Activated CD8-positive, alpha-beta memory T cell treated with anti-CD3 and anti-CD28 coated beads, Interleukin-2, amount 10 ng/mL, durations not matched to agents 7 days and 5 days (primary cell): ENCODE measurements at regions of chr9 and their contacts with region 1.

Region 1: DNA sequence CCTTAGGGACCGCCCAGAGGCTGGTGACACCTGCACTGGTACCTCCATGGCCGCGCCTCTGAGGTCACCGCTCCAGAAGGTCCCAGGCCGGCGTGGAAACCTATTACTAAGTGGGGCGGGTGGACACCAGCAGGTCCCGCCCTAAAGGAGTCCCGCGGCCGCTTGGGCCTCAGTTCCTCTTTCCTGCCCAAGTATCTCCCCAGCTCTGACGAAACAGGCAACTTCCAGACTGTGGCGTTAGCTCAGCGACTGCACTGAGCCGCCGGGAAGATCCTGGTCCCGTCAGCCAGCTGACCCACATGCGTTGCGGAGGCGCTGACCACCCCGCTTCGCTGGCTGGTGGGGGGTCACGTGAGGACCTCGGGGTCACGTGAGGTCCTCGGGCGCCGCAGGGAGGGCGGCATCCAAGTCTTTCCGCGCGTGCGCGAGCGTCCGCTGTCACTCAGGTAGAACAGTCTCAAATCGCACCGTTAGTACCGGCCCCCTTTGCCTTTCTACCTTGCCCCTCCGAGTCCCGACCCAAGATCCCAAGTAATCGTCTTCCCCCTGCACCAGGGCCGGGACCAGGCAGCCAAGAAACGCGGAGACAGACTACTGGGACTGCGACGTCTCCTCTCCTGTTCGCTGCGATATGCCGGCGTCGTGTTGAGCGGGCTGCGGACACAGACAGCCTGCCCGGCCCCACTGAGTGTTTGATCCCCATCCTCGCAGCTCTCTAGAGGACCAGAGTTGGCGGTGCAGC is 53.7 kb upstream of the KDM4C start:
- DNase-seq: peak; percentile 92
- ATAC-seq: peak; percentile 93
- H3K4me3 Mint-ChIP-seq: peak overlapping the region; percentile 90
- H3K27ac Mint-ChIP-seq: peak overlapping the region; percentile 93
- H3K4me1 Mint-ChIP-seq: peaks cover 15% of the 10 kb centered on the region
- H3K27me3 Mint-ChIP-seq: no peaks in the 10 kb centered on the region

Region 2: DNA sequence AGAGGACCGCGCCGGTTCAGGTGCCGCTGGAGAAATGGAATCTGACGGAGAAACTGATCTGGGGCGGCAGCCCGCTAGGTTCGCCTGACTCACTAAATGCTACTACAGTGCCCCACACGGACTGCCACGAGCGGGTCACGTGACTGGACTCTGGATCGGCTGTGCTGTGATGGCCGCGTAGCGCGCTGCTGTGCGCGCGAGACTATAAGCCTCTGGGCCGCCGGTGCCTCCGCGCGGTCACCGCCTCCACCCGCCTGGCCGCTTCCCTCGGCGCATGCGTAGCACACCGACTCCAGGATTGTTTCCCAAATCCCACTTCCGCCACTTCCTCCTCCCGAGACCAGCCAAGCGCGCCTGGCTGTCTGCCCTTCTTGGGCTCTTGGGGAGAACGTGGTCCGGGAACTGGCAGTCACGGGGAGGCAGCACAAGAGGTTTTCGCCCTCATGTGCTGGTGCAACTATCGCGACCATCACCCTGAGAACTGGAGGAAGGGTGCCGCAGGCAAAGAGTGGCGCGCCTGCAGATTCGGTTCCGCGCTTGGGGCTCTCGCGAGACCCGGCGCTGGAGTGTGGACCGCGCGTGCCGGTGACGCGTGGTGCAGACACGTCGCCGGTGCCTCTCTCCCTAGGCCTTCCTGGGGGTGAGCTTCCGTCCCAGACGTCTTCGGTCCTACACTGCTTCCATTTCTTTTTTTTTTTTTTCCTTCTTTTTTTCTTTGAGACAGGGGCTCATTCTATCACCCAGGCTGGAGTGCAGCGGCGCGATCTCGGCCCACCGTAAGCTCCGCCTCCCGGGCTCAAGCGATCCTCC is 22.7 kb before region 1 on chr9:
- CTCF ChIA-PET with region 1: interaction called, 13 read pairs
- DNase-seq: peak; percentile 96
- ATAC-seq: peak; percentile 90
- H3K4me3 Mint-ChIP-seq: peak overlapping the region; percentile 92
- H3K27ac Mint-ChIP-seq: peak overlapping the region; percentile 99
- H3K4me1 Mint-ChIP-seq: peaks cover 20% of the 10 kb centered on the region
- H3K27me3 Mint-ChIP-seq: no peaks in the 10 kb centered on the region

Region 3: GRCh38 chr9:6686396-6686795 is 17.7 kb before region 1 on chr9:
- CTCF ChIA-PET with region 1: interaction called, 13 read pairs
- DNase-seq: no peak
- ATAC-seq: no peak
- H3K4me3 Mint-ChIP-seq: no peak overlapping the region
- H3K27ac Mint-ChIP-seq: no peak overlapping the region
- H3K4me1 Mint-ChIP-seq: peaks cover 20% of the 10 kb centered on the region
- H3K27me3 Mint-ChIP-seq: no peaks in the 10 kb centered on the region